Activated T-helper 1 cell treated with anti-CD3 and anti-CD28 coated beads, Interleukin-12 subunit alpha, Interleukin-12 subunit beta, Interleukin-2, Interleukin-4 antibody, amounts not matched to agents 30 ng/mL and 10 ng/mL and 1 ng/mL, durations not matched to agents 14 hours and 24 hours and 36 hours (primary cell): ENCODE measurements at regions of chr11 and their contacts with region 1.

Region 1: DNA sequence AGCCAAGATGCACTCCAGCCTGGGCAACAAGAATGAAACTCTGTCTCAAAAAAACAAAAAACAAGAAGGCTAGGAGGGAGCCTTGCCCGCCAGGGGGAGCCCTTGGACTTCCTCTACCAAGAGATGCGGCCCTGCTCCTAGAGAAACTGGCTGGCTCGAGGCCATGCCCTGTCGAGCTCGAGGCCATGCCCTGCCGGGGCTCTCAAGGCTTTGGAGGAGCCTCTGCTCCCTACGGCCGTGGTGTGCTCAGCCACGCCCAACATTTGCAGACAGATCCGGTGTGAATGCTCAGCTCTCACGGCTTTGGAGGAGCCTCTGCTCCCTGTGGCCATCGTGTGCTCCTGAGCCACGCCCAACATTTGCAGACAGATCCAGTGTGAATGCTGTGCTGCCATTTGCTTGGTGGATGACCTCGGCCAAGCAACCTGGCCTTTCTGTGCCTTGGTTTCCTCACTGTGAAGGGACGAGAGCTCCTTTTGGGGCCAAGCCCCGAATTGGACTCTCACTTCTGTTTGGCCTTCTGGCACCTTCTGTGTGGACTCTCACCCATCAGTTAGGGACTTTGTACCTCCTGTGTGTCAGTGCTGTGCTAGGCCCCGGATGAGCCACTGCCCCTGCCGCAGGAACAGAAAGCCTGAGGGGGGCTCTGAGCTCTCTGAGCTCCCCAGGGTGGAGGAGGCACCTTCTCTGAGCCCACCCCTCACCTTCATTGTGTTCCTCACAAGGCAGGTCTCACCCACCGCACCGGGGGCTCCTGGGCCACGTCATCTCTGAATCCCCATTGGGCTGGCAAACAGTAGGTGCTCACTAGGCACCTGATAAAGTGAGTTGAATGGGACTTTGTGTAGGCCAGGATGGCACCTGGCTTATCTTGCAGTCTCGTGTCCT is 14.1 kb downstream of the C11orf24 start:
- DNase-seq: peak; percentile 83
- H3K4me3 Mint-ChIP-seq: no peak overlapping the region
- H3K27ac Mint-ChIP-seq: no peak overlapping the region
- H3K4me1 Mint-ChIP-seq: peaks cover 5% of the 10 kb centered on the region
- H3K27me3 Mint-ChIP-seq: peaks cover 4% of the 10 kb centered on the region

Region 2: DNA sequence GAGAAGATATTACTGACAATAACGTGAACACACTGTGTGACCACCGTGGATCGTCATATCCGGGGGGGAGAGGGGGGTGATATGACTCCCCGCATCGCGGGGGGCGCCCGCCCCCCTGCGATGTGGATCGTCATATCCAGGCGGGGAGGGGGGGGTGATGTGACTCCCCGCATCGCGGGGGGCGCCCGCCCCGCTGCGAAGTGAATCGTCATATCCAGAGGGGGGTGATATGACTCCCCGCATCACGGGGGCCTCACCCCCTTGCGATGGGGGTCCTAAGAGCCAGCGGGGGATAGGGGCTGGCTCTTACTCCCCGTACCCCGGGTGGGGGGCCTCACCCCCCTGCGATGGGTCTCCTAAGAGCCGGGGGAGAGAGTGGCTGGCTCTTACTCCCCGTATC is 273.8 kb before region 1 on chr11:
- intact Hi-C with region 1: no loop called
- DNase-seq: no peak
- H3K4me3 Mint-ChIP-seq: no peak overlapping the region
- H3K27ac Mint-ChIP-seq: no peak overlapping the region
- H3K4me1 Mint-ChIP-seq: no peaks in the 10 kb centered on the region
- H3K27me3 Mint-ChIP-seq: peaks cover 5% of the 10 kb centered on the region

Region 3: DNA sequence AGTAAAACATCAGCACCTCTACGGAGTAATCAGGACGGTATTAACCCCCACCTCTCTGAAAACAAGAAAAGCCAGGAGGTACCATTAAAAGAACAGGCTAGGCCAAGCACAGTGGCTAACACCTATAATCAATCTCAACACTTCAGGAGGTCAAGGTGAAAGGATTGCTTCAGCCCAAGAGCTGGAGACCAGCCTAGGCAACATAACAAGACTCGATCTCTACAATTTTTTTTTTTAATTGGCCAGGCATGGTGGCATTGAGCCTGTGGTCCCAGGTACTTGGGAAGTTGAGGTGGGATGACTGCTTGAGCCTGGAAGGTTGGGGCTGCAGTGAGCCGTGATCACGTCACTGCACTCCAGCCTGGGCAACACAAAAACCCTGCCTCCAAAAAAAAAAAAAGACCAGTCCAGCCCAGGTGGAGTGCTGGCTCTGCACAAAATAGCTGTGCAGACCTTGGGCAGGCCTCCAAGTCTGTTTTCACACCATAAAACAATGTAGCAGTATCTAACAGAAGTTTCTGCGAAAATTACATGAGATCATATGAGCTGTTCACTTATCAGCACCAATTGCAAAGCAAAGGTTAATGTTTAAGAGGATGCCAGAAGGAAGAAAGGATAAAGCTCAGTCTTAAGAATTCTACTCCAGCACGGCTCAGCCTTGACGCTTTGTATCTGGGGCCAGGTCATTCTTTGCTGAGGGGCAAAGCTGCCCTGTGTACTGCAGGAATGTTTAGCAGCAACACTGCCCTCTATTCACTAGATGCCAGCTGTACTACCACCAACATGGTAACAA is 151.4 kb before region 1 on chr11:
- intact Hi-C with region 1: no loop called
- DNase-seq: no peak
- H3K4me3 Mint-ChIP-seq: no peak overlapping the region
- H3K27ac Mint-ChIP-seq: no peak overlapping the region
- H3K4me1 Mint-ChIP-seq: no peaks in the 10 kb centered on the region
- H3K27me3 Mint-ChIP-seq: peaks cover 2% of the 10 kb centered on the region

Region 4: GRCh38 chr11:68213555-68214174 is 44.1 kb before region 1 on chr11:
- intact Hi-C with region 1: loop called (anchors 1 kb)
- DNase-seq: peak; percentile 76
- H3K4me3 Mint-ChIP-seq: peak overlapping the region; percentile 64
- H3K27ac Mint-ChIP-seq: no peak overlapping the region
- H3K4me1 Mint-ChIP-seq: peaks cover 44% of the 10 kb centered on the region
- H3K27me3 Mint-ChIP-seq: peaks cover 20% of the 10 kb centered on the region

Region 5: GRCh38 chr11:68297812-68298658 is 40.3 kb after region 1 on chr11:
- intact Hi-C with region 1: loop called (anchors 1 kb)
- DNase-seq: peak; percentile 60
- H3K4me3 Mint-ChIP-seq: no peak overlapping the region
- H3K27ac Mint-ChIP-seq: no peak overlapping the region
- H3K4me1 Mint-ChIP-seq: no peaks in the 10 kb centered on the region
- H3K27me3 Mint-ChIP-seq: peaks cover 8% of the 10 kb centered on the region

Region 6: DNA sequence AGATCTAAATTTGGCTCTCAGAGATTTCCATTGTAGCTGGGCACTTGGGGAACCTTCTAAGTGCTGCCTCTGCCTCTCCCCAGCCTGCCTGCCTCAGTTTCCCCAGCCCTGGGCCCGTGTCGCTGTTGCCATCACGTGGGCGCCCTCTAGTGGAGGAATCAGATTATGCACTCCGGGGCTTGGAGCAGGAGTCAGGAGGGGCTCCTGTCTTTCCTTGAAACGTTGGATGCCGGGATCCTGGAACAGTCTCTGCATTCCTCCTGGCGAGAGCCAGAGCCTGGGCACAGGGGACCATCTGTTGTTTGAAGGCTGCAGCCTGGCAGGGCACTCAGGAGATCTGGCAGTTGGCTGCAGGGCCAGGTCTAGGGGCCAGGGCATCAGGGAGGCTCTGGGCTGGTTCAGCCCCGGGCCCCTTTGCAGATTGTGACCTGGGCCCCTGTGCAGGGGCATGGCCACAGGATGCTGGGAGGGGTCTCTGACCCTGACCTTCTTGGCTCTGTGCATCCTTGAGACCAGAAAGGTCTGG is 126.3 kb after region 1 on chr11:
- intact Hi-C with region 1: loop called (anchors 1 kb)
- DNase-seq: peak; percentile 45
- H3K4me3 Mint-ChIP-seq: no peak overlapping the region
- H3K27ac Mint-ChIP-seq: no peak overlapping the region
- H3K4me1 Mint-ChIP-seq: peaks cover 29% of the 10 kb centered on the region
- H3K27me3 Mint-ChIP-seq: no peaks in the 10 kb centered on the region

Region 7: DNA sequence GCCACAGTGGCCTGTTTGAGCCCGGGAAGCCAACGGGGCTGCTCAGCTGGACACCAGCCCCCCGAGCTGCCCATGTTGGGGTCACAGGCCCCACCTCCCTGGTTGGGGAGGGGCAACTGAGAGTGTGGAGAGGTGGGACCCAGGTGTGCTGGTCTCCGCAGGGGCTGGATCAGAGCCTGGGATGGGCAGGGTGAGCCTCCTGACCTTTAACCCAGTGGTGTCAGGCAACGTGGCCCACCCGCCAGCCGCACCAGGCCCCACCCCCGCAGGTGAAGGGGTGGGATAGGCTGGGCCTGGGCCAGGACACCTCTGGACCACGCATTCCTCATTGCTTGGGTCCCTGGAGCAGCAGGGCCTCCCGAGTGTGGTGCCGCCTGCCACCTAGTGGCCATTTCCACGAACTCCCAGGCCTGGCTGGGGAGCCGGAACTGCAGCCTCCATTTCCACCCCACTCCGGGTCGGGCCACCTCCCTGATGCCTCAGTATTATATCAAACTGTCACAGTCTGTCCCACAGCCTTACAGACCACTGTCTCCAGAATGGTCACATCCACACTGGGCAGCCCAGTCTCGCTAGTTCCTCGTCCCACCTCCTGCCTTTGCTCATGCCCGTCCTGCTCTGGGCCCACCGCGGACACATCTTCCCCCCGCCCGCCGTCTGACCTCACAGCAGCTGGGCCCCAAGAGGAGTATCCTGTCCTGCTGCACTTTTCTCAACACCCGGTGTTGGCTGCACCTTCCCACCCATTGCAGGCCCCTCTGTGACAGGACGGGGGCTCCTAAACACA is 189.5 kb after region 1 on chr11:
- intact Hi-C with region 1: loop called (anchors 1 kb)
- DNase-seq: peak; percentile 64
- H3K4me3 Mint-ChIP-seq: no peak overlapping the region
- H3K27ac Mint-ChIP-seq: no peak overlapping the region
- H3K4me1 Mint-ChIP-seq: peaks cover 9% of the 10 kb centered on the region
- H3K27me3 Mint-ChIP-seq: no peaks in the 10 kb centered on the region